ENCODE measurements at regions of chr19 and their contacts with region 1.

Region 1: GRCh38 chr19:51651216-51651846 is 4.7 kb upstream of the SIGLEC14 start:
- DNase-seq: no peak
- H3K4me3 ChIP-seq: no peak overlapping the region
- H3K27ac ChIP-seq: no peak overlapping the region
- H3K4me1 ChIP-seq: no peaks in the 10 kb centered on the region
- H3K27me3 ChIP-seq: no peaks in the 10 kb centered on the region
- CTCF ChIP-seq: no peak
- POLR2A ChIP-seq: no peak

Region 2: DNA sequence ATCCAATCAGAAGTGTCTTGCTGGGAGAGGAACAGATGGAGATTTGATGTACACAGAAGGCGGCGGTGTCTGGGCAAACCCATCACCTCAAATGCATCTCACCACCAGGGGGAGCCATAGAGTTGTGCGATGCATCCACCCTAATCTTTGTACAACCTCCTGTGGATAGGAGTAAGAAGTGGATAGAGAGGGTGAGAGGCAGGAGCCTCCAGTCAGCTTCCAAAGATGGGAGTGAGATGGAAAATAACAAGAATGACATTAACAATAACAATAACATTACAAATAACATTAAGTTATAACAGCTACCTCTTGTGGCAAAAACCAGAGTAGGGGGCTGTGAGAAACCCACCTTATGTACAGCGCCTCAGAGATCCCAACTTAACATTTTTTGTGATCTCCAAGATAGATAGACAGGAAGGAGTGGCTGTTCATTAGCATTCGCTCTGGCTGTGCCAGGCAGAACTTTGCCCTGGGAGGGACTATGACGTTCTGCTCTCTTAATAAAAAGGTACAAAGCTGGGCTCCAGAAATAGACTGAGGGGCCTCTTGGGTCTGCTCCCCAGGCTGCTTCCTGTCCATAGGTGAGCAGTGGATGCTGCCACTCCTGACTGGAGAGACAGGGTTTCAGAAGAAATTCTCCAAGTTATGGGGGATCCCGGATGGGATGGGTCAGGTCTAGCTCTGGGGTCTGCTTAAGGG is 178.2 kb before region 1 on chr19:
- intact Hi-C with region 1: loop called (anchors 10 kb)
- DNase-seq: peak; percentile 54 to 70
- H3K4me3 ChIP-seq: no peak overlapping the region
- H3K27ac ChIP-seq: no peak overlapping the region
- H3K4me1 ChIP-seq: no peaks in the 10 kb centered on the region
- H3K27me3 ChIP-seq: no peaks in the 10 kb centered on the region
- CTCF ChIP-seq: peak; percentile 62 to 77 (median 77)
- POLR2A ChIP-seq: no peak